ENCODE measurements at regions of chr11 and their contacts with region 1.

Region 1: GRCh38 chr11:46308631-46309419 is 31.4 kb downstream of the CREB3L1 start:
- DNase-seq: peak; percentile 38
- H3K4me3 ChIP-seq: no peak overlapping the region
- H3K27ac ChIP-seq: no peak overlapping the region
- H3K4me1 ChIP-seq: peaks cover 2% of the 10 kb centered on the region
- H3K27me3 ChIP-seq: no peaks in the 10 kb centered on the region
- CTCF ChIP-seq: peak; percentile 94

Region 2: GRCh38 chr11:46006418-46007070 is 302.3 kb before region 1 on chr11:
- CTCF ChIA-PET with region 1: no interaction called
- dilution Hi-C with region 1: no loop called
- in situ Hi-C with region 1: no loop called
- intact Hi-C with region 1: loop called (anchors 1 kb)
- DNase-seq: peak; percentile 57
- H3K4me3 ChIP-seq: no peak overlapping the region
- H3K27ac ChIP-seq: no peak overlapping the region
- H3K4me1 ChIP-seq: no peaks in the 10 kb centered on the region
- H3K27me3 ChIP-seq: no peaks in the 10 kb centered on the region
- CTCF ChIP-seq: peak; percentile 72 to 80

Region 3: GRCh38 chr11:46127150-46127638 is 181.6 kb before region 1 on chr11:
- CTCF ChIA-PET with region 1: no interaction called
- dilution Hi-C with region 1: no loop called
- in situ Hi-C with region 1: no loop called
- intact Hi-C with region 1: loop called (anchors 2 kb)
- DNase-seq: peak; percentile 73
- H3K4me3 ChIP-seq: no peak overlapping the region
- H3K27ac ChIP-seq: no peak overlapping the region
- H3K4me1 ChIP-seq: peaks cover 7% of the 10 kb centered on the region
- H3K27me3 ChIP-seq: no peaks in the 10 kb centered on the region
- CTCF ChIP-seq: peak; percentile 55 to 67

Region 4: GRCh38 chr11:46188045-46188444 is 120.8 kb before region 1 on chr11:
- CTCF ChIA-PET with region 1: no interaction called
- dilution Hi-C with region 1: no loop called
- in situ Hi-C with region 1: no loop called
- intact Hi-C with region 1: no loop called
- DNase-seq: no peak
- H3K4me3 ChIP-seq: no peak overlapping the region
- H3K27ac ChIP-seq: no peak overlapping the region
- H3K4me1 ChIP-seq: peaks cover 6% of the 10 kb centered on the region
- H3K27me3 ChIP-seq: no peaks in the 10 kb centered on the region
- CTCF ChIP-seq: no peak

Region 5: DNA sequence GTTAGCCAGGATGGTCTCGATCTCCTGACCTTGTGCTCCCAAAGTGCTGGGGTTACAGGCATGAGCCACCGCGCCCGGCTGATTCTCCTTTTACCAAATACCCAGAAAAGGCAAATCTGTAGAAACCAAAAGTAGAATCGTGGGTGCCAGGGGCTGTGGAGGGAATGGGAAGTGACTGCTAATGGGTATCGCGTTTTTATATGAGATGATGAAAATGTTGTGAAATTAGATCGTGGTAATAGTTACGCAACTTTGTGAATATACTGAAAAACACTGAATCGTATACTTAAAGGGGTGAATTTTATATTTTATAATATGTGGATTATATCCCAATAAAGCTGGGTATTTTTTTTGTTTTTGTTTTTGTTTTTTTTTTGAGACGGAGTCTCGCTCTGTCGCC is 79.6 kb before region 1 on chr11:
- CTCF ChIA-PET with region 1: no interaction called
- dilution Hi-C with region 1: no loop called
- in situ Hi-C with region 1: no loop called
- intact Hi-C with region 1: no loop called
- DNase-seq: no peak
- H3K4me3 ChIP-seq: no peak overlapping the region
- H3K27ac ChIP-seq: no peak overlapping the region
- H3K4me1 ChIP-seq: no peaks in the 10 kb centered on the region
- H3K27me3 ChIP-seq: no peaks in the 10 kb centered on the region
- CTCF ChIP-seq: no peak

Region 6: GRCh38 chr11:46247664-46248063 is 61.2 kb before region 1 on chr11:
- CTCF ChIA-PET with region 1: no interaction called
- dilution Hi-C with region 1: no loop called
- in situ Hi-C with region 1: loop called (anchors 5 kb)
- intact Hi-C with region 1: loop called (anchors 1 kb)
- DNase-seq: peak; percentile 66
- H3K4me3 ChIP-seq: no peak overlapping the region
- H3K27ac ChIP-seq: no peak overlapping the region
- H3K4me1 ChIP-seq: peaks cover 26% of the 10 kb centered on the region
- H3K27me3 ChIP-seq: no peaks in the 10 kb centered on the region
- CTCF ChIP-seq: peak; percentile 54 to 70

Region 7: DNA sequence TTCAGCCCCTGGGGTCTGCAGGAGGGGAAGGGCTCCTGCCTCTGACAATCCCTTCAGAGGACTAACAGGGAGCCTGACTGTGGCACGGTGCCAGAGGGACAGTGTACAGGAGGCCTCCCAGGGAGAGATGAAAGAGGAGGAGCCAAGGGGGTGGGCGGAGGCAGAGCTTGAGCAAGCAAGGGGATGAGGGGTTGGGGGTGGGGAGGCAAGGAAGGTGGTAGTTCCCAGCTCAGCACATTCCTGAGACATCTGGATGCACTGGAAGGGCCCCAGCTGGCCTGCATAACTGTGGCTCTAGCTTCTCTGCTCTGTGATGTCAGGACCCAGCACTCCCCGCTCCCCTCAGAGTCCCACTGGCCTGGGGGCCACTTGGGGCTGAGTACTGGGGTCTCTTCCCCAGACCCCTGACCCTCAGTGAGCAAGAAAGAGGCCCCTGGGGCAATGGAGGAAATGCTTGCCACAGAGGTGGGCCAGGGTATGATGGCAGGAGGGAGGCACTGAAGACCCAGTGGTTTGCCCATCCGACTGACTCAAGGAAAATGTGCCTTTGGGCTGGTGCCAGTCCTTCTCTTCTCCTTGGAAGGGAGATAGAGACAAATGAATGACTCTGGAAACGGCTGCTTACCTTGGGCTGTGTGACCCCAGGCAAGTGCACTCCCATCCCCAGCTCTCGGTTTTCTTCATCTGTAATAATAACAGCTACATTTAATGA is 18.1 kb before region 1 on chr11:
- CTCF ChIA-PET with region 1: interaction called, 16 read pairs
- dilution Hi-C with region 1: no loop called
- in situ Hi-C with region 1: no loop called
- intact Hi-C with region 1: no loop called
- DNase-seq: no peak
- H3K4me3 ChIP-seq: no peak overlapping the region
- H3K27ac ChIP-seq: no peak overlapping the region
- H3K4me1 ChIP-seq: peaks cover 9% of the 10 kb centered on the region
- H3K27me3 ChIP-seq: peaks cover under 1% of the 10 kb centered on the region
- CTCF ChIP-seq: no peak

Measured in mammary epithelial cell (primary cell).